HCT116 (cell line): ENCODE measurements at regions of chr7 and their contacts with region 1.

Region 1: DNA sequence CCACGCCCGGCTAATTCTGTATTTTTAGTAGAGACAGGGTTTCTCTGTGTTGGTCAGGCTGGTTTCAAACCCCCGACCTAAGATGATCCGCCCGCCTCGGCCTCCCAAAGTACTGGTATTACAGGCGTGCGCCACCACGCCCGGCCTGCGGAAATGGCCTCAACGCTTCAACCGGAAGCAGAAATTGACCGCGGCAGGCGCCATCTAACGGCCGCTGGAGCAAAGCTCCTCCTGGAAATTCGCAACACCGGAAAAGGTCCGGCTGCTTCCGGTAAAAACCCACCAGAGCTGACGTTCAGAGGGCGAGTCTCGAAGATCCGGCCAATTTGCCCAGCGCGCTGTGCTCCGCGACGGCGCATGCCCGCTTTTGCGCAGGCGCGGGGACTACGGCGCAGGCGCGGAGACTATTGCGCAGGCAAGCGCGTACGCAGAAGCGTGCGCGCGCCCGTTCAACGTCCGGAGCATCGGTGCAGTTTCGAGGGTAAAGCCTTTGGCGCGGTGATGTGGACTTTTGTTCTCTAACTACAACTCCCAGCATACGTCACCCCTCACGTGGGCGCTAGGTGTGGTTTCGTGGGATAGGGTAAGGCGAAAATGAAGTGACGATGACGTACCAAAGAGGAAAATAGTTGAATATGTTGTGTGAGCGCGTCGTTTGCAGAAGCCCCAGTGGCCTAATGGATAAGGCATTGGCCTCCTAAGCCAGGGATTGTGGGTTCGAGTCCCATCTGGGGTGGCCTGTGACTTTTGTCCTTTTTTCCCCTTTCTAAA is 915 bp upstream of the FMC1 start:
- DNase-seq: peak; percentile 98
- ATAC-seq: peak; percentile 74
- H3K4me3 ChIP-seq: peak overlapping the region; percentile 78 to 90
- H3K27ac ChIP-seq: peak overlapping the region; percentile 95
- H3K4me1 ChIP-seq: peaks cover 3 to 26% of the 10 kb centered on the region in 2 experiments; a peak in 3 of 4 replicates
- H3K27me3 ChIP-seq: no peaks in the 10 kb centered on the region
- CTCF ChIP-seq: peak in 2 of 3 experiments; percentile 68 to 72; a peak in 4 of 6 replicates
- POLR2A ChIP-seq: no peak
- RAD21 ChIP-seq: no peak

Region 2: DNA sequence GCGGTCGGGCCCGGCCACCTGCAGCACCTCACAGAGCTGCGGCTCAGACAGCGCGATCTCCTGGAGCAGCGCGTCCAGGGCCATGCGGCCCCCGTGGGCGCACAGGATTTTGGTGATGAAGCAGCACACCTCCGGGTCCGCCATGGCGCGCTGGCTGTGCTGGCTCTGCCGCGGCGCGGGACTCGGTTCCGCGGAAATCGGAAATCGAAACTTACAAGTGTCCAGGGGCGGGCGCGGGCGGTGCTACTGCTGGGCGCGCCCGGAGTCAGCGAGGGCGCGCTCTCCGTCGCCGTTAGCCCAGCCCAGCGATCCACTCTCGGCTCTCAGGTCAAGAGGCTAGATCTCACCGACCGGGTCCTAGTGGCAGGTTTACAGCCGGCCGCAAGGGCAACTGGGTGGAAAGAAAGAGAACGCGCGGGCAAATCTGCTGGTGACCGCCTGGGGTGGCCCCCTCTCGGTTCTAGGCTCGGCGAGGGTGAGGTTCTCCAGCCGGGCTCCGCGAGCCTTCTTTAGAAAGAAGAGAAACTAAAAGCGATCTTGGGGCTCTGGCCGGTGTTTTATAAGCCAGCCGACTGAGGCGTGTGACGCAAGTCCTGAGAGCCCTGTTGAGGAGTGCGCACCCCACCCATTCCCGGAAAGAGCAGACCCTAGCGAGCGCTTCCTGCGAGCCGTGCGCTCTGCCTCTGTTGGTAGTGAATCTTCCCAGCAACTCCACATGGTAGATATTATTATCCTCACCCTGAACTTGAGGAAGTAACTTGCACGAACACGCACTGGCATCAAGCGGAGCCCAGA is 230.8 kb before region 1 on chr7 and contains the start of gene ZC3HAV1:
- CTCF ChIA-PET with region 1: no interaction called
- POLR2A ChIA-PET with region 1: no interaction called
- RAD21 ChIA-PET with region 1: no interaction called
- intact Hi-C with region 1: loop called (anchors 10 kb)
- DNase-seq: peak; percentile 50
- ATAC-seq: peak; percentile 85
- H3K4me3 ChIP-seq: peak within 1 kb of the TSS; percentile 88 to 96
- H3K27ac ChIP-seq: peak within 1 kb of the TSS; percentile 92
- H3K4me1 ChIP-seq: peaks cover 5 to 21% of the 10 kb centered on the region in 2 experiments; a peak in 3 of 4 replicates
- H3K27me3 ChIP-seq: no peaks in the 10 kb centered on the region
- CTCF ChIP-seq: no peak
- POLR2A ChIP-seq: peak; percentile 34
- RAD21 ChIP-seq: no peak
- total RNA-seq, gene ZC3HAV1: 23.7 TPM

Region 3: GRCh38 chr7:139180700-139181311 is 159.4 kb before region 1 on chr7:
- CTCF ChIA-PET with region 1: no interaction called
- POLR2A ChIA-PET with region 1: no interaction called
- RAD21 ChIA-PET with region 1: no interaction called
- intact Hi-C with region 1: no loop called
- DNase-seq: no peak
- ATAC-seq: no peak
- H3K4me3 ChIP-seq: no peak overlapping the region
- H3K27ac ChIP-seq: no peak overlapping the region
- H3K4me1 ChIP-seq: no peaks in the 10 kb centered on the region
- H3K27me3 ChIP-seq: no peaks in the 10 kb centered on the region
- CTCF ChIP-seq: no peak
- POLR2A ChIP-seq: no peak
- RAD21 ChIP-seq: no peak

Region 4: DNA sequence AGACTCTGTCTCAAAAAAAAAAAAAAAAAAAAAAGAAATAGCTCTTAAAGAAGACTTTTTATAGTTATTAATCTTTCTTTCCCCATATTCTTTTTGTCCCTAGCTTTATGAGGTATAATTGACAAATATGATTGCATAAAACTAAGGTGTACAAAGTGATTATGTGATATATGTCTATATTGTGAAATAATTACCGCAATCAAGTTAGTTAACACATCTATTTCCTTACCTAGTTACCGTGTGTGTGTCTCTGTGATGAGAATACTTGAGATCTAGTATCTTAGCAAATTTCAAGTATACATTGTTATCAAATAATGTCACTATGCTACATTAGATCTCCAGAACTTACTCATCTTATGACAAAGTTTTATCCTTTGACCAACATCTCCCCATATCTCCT is 139.8 kb before region 1 on chr7:
- CTCF ChIA-PET with region 1: no interaction called
- POLR2A ChIA-PET with region 1: no interaction called
- RAD21 ChIA-PET with region 1: no interaction called
- intact Hi-C with region 1: no loop called
- DNase-seq: no peak
- ATAC-seq: no peak
- H3K4me3 ChIP-seq: no peak overlapping the region
- H3K27ac ChIP-seq: no peak overlapping the region
- H3K4me1 ChIP-seq: no peaks in the 10 kb centered on the region
- H3K27me3 ChIP-seq: no peaks in the 10 kb centered on the region
- CTCF ChIP-seq: no peak
- POLR2A ChIP-seq: no peak
- RAD21 ChIP-seq: no peak

Region 5: DNA sequence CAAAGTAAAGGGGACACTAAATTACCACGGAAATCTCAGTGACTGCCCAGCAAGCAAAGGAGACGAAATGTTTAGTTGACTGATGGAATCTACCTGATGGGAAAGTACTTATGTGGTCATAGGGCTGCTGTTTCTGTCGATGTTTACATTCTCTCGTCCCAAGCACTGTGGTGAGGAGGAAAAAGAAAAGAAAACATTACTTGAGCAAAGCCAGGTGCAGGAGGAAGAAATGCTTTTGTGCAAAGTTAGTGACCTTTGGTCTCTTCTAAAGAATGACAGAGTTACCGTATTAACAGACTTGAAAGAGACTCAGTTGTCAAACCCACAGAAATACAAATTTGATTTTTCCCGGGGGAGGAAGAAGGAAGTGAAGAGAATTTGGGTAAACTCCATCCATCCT is 42.4 kb before region 1 on chr7:
- CTCF ChIA-PET with region 1: no interaction called
- POLR2A ChIA-PET with region 1: no interaction called
- RAD21 ChIA-PET with region 1: no interaction called
- intact Hi-C with region 1: no loop called
- DNase-seq: no peak
- ATAC-seq: no peak
- H3K4me3 ChIP-seq: no peak overlapping the region
- H3K27ac ChIP-seq: no peak overlapping the region
- H3K4me1 ChIP-seq: no peaks in the 10 kb centered on the region
- H3K27me3 ChIP-seq: no peaks in the 10 kb centered on the region
- CTCF ChIP-seq: no peak
- POLR2A ChIP-seq: no peak
- RAD21 ChIP-seq: no peak

Region 6: GRCh38 chr7:139359366-139360209 is 19.4 kb after region 1 on chr7 and contains the start of gene LUC7L2:
- CTCF ChIA-PET with region 1: interaction called, 5 read pairs
- POLR2A ChIA-PET with region 1: interaction called, 5 read pairs
- RAD21 ChIA-PET with region 1: no interaction called
- intact Hi-C with region 1: loop called (anchors 1 kb)
- DNase-seq: peak; percentile 95
- ATAC-seq: peak; percentile 80
- H3K4me3 ChIP-seq: peak within 1 kb of the TSS; percentile 67 to 91
- H3K27ac ChIP-seq: peak within 1 kb of the TSS; percentile 98
- H3K4me1 ChIP-seq: peaks cover 16 to 22% of the 10 kb centered on the region in 2 experiments; a peak in 3 of 4 replicates
- H3K27me3 ChIP-seq: no peaks in the 10 kb centered on the region
- CTCF ChIP-seq: no peak
- POLR2A ChIP-seq: peak; percentile 97
- RAD21 ChIP-seq: no peak
- total RNA-seq, gene LUC7L2: 98.8 TPM

Region 7: DNA sequence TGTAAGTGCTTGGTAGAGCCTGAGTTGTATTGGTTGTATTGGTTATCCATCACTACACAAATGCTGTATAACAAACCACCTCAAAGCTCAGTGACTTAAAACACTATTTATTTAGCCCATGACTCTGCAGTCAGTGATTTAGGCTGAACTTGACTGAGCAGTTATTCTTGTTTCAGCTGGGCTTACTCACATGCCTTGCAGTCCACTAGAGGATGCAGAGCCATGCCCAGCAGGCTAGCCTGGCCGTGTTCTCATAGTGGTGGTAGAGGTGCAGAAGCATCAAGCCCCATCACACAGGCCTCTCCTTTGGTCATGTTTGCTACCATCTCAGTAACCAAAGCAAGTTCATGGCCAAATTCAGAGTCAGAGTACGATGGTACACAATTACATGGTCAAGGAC is 63.4 kb after region 1 on chr7:
- CTCF ChIA-PET with region 1: no interaction called
- POLR2A ChIA-PET with region 1: no interaction called
- RAD21 ChIA-PET with region 1: no interaction called
- intact Hi-C with region 1: no loop called
- DNase-seq: no peak
- ATAC-seq: no peak
- H3K4me3 ChIP-seq: no peak overlapping the region
- H3K27ac ChIP-seq: no peak overlapping the region
- H3K4me1 ChIP-seq: no peaks in the 10 kb centered on the region
- H3K27me3 ChIP-seq: no peaks in the 10 kb centered on the region
- CTCF ChIP-seq: no peak
- POLR2A ChIP-seq: no peak
- RAD21 ChIP-seq: no peak